Dorsolateral prefrontal cortex (tissue), 120 donors: ENCODE measurements at regions of chr19 and their contacts with region 1.

Region 1: DNA sequence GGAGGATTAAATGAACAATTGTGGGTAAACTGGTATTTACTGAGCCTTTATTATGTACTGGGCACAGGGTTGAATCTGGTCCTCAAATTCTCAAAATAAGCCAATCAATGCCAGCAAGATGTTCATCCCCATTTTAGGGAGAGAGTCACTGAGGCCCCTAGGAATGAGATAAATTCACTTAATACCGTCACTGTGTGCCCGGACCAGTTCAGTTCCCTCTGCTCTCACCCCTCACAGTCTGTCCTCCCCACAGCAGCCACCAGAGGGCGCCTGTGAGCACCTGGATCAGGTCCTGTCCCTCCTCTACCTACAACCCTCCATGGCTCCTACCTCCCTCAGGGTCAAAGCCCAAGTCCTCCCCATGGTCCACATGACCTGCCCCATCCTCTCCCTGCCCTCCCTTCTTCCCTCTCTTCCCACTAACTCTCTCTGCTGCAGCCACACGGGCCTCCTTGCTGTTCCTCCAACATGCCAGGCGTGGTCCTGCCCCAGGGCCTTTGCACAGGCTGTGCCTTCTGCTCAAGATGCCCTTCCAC is 42.0 kb upstream of the NFIC start:
- DNase-seq: peak in 3 of 10 donors; percentile 22 to 47 (median 40)
- H3K4me3 ChIP-seq: no peak overlapping the region
- H3K27ac ChIP-seq: no peak overlapping the region
- H3K27me3 ChIP-seq: peaks cover 0 to 23% (median 4%) of the 10 kb centered on the region in 45 donors
- CTCF ChIP-seq: peak; percentile 14 to 76 (median 62)

Region 2: GRCh38 chr19:3302755-3303154 is 21.6 kb before region 1 on chr19:
- intact Hi-C with region 1: no loop called
- DNase-seq: no peak
- H3K4me3 ChIP-seq: no peak overlapping the region
- H3K27ac ChIP-seq: no peak overlapping the region
- H3K27me3 ChIP-seq: peaks cover 0 to 33% (median 5%) of the 10 kb centered on the region in 45 donors
- CTCF ChIP-seq: peak in 1 of 56 donors; percentile 9

Region 3: GRCh38 chr19:3429581-3430080 is 105.2 kb after region 1 on chr19:
- intact Hi-C with region 1: loop called (anchors 1 to 2 kb)
- DNase-seq: peak; percentile 77 to 89 (median 84)
- H3K4me3 ChIP-seq: peak overlapping the region in 5 of 59 donors; percentile 3 to 33 (median 25)
- H3K27ac ChIP-seq: peak overlapping the region in 58 of 59 donors; percentile 49 to 94 (median 80)
- H3K27me3 ChIP-seq: no peaks in the 10 kb centered on the region
- CTCF ChIP-seq: peak; percentile 93 to 100 (median 98)

Region 4: DNA sequence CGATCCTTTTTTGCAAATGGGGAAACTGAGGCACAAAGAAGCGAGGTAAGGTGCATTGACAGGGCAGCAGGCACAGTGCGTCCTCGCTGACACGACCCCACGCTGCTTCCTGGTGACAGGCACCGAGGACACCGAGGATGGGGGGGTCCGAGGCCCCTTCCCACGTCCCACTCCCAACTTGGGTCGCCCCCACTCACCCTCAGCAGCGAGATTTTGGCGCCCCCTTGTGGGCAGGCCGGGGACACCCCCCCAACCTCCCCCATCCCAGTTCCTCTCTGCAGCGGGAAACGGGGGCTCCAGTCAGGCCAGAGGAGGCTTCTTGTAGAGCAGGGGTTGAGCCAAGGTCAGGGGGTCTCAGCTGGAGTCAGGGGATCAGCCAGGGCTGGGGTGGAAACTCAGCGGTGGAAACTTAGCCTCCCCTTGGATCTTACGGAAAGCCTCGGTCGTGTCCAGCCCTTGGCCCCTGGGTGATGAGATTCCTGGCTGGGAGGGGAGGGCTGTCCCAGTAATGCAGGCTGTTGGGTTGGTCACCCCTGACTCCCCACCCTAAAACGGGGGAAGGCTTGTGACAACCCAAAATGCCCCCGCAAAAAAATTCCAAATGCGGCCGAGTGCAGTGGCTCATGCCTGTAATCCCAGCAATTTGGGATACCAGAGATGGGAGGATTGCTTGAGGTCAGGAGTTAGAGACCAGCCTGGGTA is 147.7 kb after region 1 on chr19:
- intact Hi-C with region 1: loop called in 1 of 2 experiments (anchors 5 kb)
- DNase-seq: peak in 3 of 10 donors; percentile 23 to 57 (median 40)
- H3K4me3 ChIP-seq: peak overlapping the region in 3 of 59 donors; percentile 7 to 40 (median 17)
- H3K27ac ChIP-seq: no peak overlapping the region
- H3K27me3 ChIP-seq: no peaks in the 10 kb centered on the region
- CTCF ChIP-seq: peak; percentile 55 to 96 (median 88)

Region 5: GRCh38 chr19:3606690-3607289 is 282.4 kb after region 1 on chr19 and contains the start of gene TBXA2R:
- intact Hi-C with region 1: loop called in 1 of 2 experiments (anchors 10 kb)
- DNase-seq: peak in 7 of 10 donors; percentile 30 to 76 (median 66)
- H3K4me3 ChIP-seq: peak within 1 kb of the TSS; percentile 32 to 72 (median 57)
- H3K27ac ChIP-seq: peak within 1 kb of the TSS in 43 of 59 donors; percentile 1 to 80 (median 48)
- H3K27me3 ChIP-seq: peaks cover 0 to 23% (median 0%) of the 10 kb centered on the region in 45 donors
- CTCF ChIP-seq: no peak
- total RNA-seq, gene TBXA2R: 0.36 to 2.7 (median 1.4) TPM